ENCODE measurements at regions of chr15 and their contacts with region 1.

Region 1: GRCh38 chr15:39874890-39875549 is 45.0 kb downstream of the GPR176 start:
- DNase-seq: no peak
- ATAC-seq: no peak
- H3K4me3 ChIP-seq: no peak overlapping the region
- H3K27ac ChIP-seq: no peak overlapping the region
- H3K4me1 ChIP-seq: peaks cover 0 to 2% (median 0%) of the 10 kb centered on the region in 9 donors
- H3K27me3 ChIP-seq: no peaks in the 10 kb centered on the region
- CTCF ChIP-seq: peak; percentile 22 to 73 (median 59)

Region 2: DNA sequence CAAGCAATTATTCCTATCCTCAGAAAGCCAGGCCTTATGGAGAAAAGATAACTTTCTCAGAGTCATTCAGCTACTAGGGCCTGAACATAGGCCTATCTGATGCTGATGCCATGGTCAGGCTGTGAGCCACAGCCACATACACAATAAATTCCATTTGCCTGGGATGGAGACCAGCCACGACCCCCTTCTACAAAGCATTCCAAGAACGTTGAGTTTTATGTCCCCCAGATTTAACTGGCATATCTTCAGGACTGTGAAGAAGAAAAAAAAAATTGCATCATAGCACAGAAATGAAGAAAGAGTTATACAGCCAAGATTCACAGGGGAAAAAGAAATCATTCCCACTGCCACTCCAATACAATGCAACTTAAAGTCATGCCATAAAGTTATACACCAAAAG is 194.2 kb before region 1 on chr15:
- intact Hi-C with region 1: loop called in 3 of 10 experiments (anchors 5 to 10 kb)
- DNase-seq: no peak
- ATAC-seq: no peak
- H3K4me3 ChIP-seq: no peak overlapping the region
- H3K27ac ChIP-seq: no peak overlapping the region
- H3K4me1 ChIP-seq: no peaks in the 10 kb centered on the region
- H3K27me3 ChIP-seq: no peaks in the 10 kb centered on the region
- CTCF ChIP-seq: no peak

Region 3: DNA sequence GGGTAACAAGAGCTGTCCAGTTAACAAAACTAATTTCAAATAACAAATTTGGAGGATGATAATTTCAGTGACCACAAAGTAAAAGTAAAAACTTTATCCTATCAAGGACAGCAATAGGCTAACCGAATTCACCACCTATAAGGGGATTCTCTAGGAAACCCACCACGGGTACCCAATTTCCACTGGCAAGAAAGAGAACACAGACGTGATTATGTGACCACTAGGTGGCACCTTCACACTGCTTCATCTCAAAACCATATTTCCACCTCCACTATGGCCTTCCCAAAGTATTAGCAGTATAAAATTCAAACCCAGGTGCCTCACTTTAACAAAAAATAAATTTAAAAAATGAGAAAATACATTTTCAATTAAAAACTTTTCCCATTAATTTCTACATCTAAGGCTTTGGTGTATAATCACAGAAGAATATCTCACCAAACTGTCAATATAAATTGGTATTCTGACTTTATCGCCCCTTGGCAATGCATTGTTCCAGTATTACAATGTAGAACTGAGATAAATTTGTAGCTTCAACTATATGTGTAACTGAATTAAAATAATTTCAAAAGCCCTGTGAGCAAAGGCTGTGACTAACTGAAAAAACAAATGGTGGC is 188.9 kb before region 1 on chr15:
- intact Hi-C with region 1: loop called in 3 of 10 experiments (anchors 5 to 10 kb)
- DNase-seq: peak in 1 of 2 donors; percentile 32
- ATAC-seq: peak in 6 of 8 donors; percentile 59 to 78 (median 66)
- H3K4me3 ChIP-seq: no peak overlapping the region
- H3K27ac ChIP-seq: no peak overlapping the region
- H3K4me1 ChIP-seq: no peaks in the 10 kb centered on the region
- H3K27me3 ChIP-seq: no peaks in the 10 kb centered on the region
- CTCF ChIP-seq: peak; percentile 55 to 88 (median 84)

Region 4: GRCh38 chr15:39799552-39800011 is 75.4 kb before region 1 on chr15:
- intact Hi-C with region 1: loop called in 2 of 10 experiments (anchors 10 kb)
- DNase-seq: no peak
- ATAC-seq: peak in 3 of 8 donors; percentile 26 to 51 (median 29)
- H3K4me3 ChIP-seq: no peak overlapping the region
- H3K27ac ChIP-seq: peak overlapping the region in 1 of 10 donors; percentile 55
- H3K4me1 ChIP-seq: peaks cover 0 to 15% (median 0%) of the 10 kb centered on the region in 9 donors
- H3K27me3 ChIP-seq: no peaks in the 10 kb centered on the region
- CTCF ChIP-seq: no peak

Region 5: DNA sequence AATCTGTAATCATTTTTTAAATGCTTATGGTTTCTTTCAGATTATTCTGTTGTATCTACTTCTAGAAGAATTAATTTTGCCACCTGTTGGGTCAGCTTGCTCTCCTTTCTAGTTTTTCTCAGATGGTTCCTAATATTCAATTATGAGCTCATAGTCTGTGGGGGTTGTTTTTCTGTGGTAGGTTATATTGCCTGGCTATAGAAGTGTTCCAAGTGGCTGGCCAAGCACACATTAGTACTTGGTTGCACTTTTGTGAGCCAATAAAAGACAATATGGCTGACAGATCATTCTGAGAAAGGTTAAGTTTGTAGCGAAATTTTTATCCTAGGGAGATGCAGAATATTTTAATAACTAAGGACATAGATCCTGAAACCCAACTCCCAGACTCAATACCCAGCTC is 60.5 kb before region 1 on chr15:
- intact Hi-C with region 1: no loop called
- DNase-seq: no peak
- ATAC-seq: no peak
- H3K4me3 ChIP-seq: no peak overlapping the region
- H3K27ac ChIP-seq: no peak overlapping the region
- H3K4me1 ChIP-seq: peaks cover 0 to 8% (median 0%) of the 10 kb centered on the region in 9 donors
- H3K27me3 ChIP-seq: no peaks in the 10 kb centered on the region
- CTCF ChIP-seq: no peak